ENCODE measurements at regions of chr5 and their contacts with region 1.

Region 1: DNA sequence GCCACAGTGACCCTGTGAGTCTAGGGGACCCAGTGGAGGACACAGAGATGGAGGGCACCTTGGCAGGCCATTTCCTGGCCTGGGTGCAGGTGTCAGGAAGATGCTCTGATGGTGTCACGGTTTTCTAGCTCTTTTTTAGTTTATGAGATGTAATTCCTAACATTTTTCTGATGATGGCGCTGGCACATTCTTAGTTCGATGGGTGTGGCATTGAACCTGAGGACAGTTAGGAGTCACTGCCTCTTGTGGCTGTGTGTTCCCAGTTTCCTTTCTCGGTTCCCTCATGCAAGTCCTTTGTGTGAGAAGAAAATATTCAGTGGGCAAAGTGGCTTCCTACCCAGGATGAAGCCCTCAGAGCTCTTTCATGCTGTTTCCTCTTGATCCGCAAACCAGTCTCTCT is 129.4 kb upstream of the ICE1 start:
- DNase-seq: no peak

Region 2: DNA sequence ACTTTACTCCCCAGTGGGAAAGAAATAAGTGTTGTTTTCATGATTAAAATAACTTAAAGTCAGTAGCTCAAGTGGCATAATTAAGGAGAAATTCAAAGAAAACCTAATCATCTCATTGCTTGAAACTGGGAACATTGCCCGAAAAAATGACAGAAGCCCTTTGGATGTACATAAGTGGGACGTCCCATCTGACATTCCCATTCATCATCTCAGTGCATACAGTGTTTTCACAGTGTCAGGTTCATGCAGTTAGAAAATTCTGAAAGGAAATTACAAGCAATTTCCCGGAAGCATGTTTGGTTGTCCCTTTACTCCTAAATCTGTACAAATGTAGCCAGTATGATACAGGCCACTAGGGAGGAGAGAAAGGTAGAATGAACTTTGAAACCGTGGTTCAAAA is 57.3 kb before region 1 on chr5:
- CTCF ChIA-PET with region 1: no interaction called
- POLR2A ChIA-PET with region 1: no interaction called
- DNase-seq: no peak

Region 3: GRCh38 chr5:5398046-5398445 is 105.0 kb after region 1 on chr5:
- CTCF ChIA-PET with region 1: interaction called, 14 read pairs
- POLR2A ChIA-PET with region 1: no interaction called
- DNase-seq: no peak

Region 4: DNA sequence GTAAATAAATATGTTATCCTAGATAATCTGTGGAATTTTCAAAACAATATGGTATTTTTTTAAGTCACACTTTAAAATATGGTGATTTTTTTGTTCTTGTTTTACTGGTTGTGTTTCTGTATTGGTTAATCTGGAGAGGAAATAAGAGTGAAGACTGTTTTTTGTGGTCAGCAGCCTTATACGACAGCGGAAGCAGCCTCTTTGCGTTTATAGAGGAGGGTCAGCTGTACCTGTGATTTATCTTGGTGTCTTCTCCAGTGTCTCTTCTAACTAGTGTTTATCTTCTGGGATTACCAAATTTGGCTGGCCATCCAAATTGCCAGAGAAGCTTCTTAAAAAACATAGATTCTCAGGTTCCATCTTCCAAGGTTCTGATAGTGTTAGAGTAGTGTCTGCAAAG is 188.2 kb after region 1 on chr5:
- CTCF ChIA-PET with region 1: no interaction called
- POLR2A ChIA-PET with region 1: no interaction called
- DNase-seq: no peak